GM10248 (cell line): ENCODE measurements at regions of chr6 and their contacts with region 1.

Region 1: GRCh38 chr6:134502614-134503549 is 185.0 kb upstream of the SGK1 start:
- DNase-seq: no peak
- CTCF ChIP-seq: no peak

Region 2: GRCh38 chr6:134512981-134513391 is 10.1 kb after region 1 on chr6:
- CTCF ChIA-PET with region 1: interaction called, 15 read pairs
- POLR2A ChIA-PET with region 1: no interaction called
- DNase-seq: no peak
- CTCF ChIP-seq: no peak